Heart right ventricle (tissue), 16 donors: ENCODE measurements at regions of chr1 and their contacts with region 1.

Region 1: DNA sequence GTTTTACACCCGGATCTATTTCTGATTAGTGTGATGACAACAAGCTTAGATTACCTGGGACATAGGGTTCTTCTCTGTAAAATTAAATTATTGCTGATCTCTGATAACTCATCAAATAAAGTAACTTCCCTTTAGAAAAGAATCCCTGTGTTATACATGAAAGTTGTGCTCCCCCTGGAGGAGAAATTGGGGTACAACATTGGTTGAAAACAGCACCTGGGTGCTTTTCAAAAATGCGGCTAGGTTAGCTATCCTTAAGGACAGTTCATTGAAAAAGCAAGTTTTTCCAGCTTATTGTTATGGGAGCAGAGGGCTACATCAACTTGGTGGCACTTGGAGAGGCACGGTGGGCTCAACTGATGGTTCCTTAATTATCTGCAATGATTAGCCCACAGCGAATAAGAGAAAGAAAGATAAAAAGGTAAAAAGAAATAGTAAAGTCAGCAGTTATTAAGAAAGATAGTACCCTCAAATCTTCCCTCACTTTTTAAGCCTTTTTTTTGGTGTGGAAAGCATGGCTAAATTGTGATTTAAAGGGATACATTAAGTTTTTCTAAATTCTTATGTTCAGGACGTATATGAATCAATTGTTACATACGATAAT is 97.8 kb downstream of the FMN2 start:
- DNase-seq: peak in 1 of 2 donors; percentile 14
- ATAC-seq: no peak
- H3K4me3 ChIP-seq: no peak overlapping the region
- H3K27ac ChIP-seq: no peak overlapping the region
- H3K4me1 ChIP-seq: no peaks in the 10 kb centered on the region
- H3K27me3 ChIP-seq: peaks cover 0 to 41% (median 11%) of the 10 kb centered on the region in 7 donors
- CTCF ChIP-seq: peak; percentile 26 to 76 (median 66)

Region 2: GRCh38 chr1:240027059-240027462 is 162.4 kb before region 1 on chr1:
- intact Hi-C with region 1: loop called in 2 of 10 experiments (anchors 5 kb)
- DNase-seq: no peak
- ATAC-seq: no peak
- H3K4me3 ChIP-seq: no peak overlapping the region
- H3K27ac ChIP-seq: no peak overlapping the region
- H3K4me1 ChIP-seq: no peaks in the 10 kb centered on the region
- H3K27me3 ChIP-seq: peaks cover 0 to 4% (median 0%) of the 10 kb centered on the region in 7 donors
- CTCF ChIP-seq: peak; percentile 52 to 86 (median 76)

Region 3: GRCh38 chr1:240608707-240609106 is 419.2 kb after region 1 on chr1:
- intact Hi-C with region 1: loop called in 1 of 10 experiments (anchors 5 kb)
- DNase-seq: no peak
- ATAC-seq: no peak
- H3K4me3 ChIP-seq: no peak overlapping the region
- H3K27ac ChIP-seq: no peak overlapping the region
- H3K4me1 ChIP-seq: peaks cover 0 to 13% (median 0%) of the 10 kb centered on the region in 9 donors
- H3K27me3 ChIP-seq: peaks cover 0 to 50% (median 36%) of the 10 kb centered on the region in 7 donors
- CTCF ChIP-seq: peak in 2 of 9 donors; percentile 23 to 27

Region 4: GRCh38 chr1:240691521-240692338 is 502.2 kb after region 1 on chr1:
- intact Hi-C with region 1: loop called in 5 of 10 experiments (anchors 5 to 10 kb)
- DNase-seq: peak in 1 of 2 donors; percentile 4
- ATAC-seq: peak in 1 of 8 donors; percentile 58
- H3K4me3 ChIP-seq: no peak overlapping the region
- H3K27ac ChIP-seq: no peak overlapping the region
- H3K4me1 ChIP-seq: no peaks in the 10 kb centered on the region
- H3K27me3 ChIP-seq: peaks cover 0 to 10% (median 0%) of the 10 kb centered on the region in 7 donors
- CTCF ChIP-seq: peak in 7 of 9 donors; percentile 35 to 59 (median 42)